Breast epithelium (tissue), 4 donors: ENCODE measurements at regions of chr12 and their contacts with region 1.

Region 1: GRCh38 chr12:7047306-7047705 is 13.2 kb upstream of the C1S start:
- DNase-seq: no peak
- H3K4me3 ChIP-seq: no peak overlapping the region
- H3K27ac ChIP-seq: no peak overlapping the region
- H3K4me1 ChIP-seq: no peaks in the 10 kb centered on the region
- H3K27me3 ChIP-seq: no peaks in the 10 kb centered on the region
- CTCF ChIP-seq: no peak
- POLR2A ChIP-seq: no peak

Region 2: GRCh38 chr12:5244513-5244972 is 1802.8 kb before region 1 on chr12:
- intact Hi-C with region 1: no loop called
- DNase-seq: no peak
- H3K4me3 ChIP-seq: no peak overlapping the region
- H3K27ac ChIP-seq: no peak overlapping the region
- H3K4me1 ChIP-seq: no peaks in the 10 kb centered on the region
- H3K27me3 ChIP-seq: no peaks in the 10 kb centered on the region
- CTCF ChIP-seq: no peak
- POLR2A ChIP-seq: no peak

Region 3: DNA sequence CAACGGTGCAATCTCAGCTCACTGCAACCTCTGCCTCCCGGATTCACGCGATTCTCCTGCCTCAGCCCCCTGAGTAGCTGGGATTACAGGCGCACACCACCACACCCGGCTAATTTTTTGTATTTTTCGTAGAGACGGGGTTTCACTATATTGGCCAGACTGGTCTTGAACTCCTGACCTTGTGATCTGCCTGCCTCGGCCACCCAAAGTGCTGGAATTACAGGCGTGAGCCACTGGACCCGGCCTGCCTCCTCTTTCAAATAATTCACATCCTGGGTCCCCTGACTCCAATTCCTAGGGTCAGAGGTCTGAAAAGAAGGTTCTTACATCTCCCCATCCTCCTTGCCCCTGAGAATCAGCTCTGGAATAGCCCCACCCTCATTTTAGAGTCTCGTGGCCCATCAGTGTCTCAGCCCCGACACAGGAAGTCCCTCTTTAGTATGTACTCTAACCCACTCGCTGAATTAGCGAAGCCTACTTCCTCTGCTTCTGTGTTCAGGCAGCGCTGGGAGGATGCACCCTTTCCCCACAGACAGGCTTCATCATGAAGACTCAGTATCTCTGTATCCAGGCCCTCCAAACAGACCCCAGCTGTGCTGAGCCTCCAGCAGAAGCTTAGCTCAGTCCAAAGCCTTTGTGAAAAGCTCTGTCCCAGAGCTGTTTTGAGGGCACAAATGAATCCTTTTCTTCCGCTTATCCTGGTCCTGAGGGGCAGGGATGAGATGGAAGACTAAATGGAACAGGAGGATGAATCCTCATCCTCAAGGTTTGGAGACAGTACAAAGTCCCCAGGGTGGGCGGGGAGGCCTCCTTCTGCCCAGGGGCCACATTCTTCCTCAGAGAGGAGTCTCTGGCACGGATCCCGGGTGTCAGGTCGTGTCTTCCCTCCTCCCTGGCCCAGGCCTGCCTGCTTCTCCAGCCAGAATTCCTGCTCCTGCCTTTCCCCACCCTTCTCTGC is 415.0 kb before region 1 on chr12:
- intact Hi-C with region 1: no loop called
- DNase-seq: no peak
- H3K4me3 ChIP-seq: no peak overlapping the region
- H3K27ac ChIP-seq: peak overlapping the region; percentile 58 to 76
- H3K4me1 ChIP-seq: peaks cover 0 to 6% of the 10 kb centered on the region in 2 donors
- H3K27me3 ChIP-seq: no peaks in the 10 kb centered on the region
- CTCF ChIP-seq: no peak
- POLR2A ChIP-seq: no peak

Region 4: GRCh38 chr12:7155481-7156034 is 108.3 kb after region 1 on chr12:
- intact Hi-C with region 1: no loop called
- DNase-seq: peak; percentile 64 to 69
- H3K4me3 ChIP-seq: peak overlapping the region in 2 of 3 donors; percentile 6 to 14
- H3K27ac ChIP-seq: peak overlapping the region; percentile 80 to 92
- H3K4me1 ChIP-seq: peaks cover 8 to 14% of the 10 kb centered on the region in 2 donors
- H3K27me3 ChIP-seq: no peaks in the 10 kb centered on the region
- CTCF ChIP-seq: no peak
- POLR2A ChIP-seq: no peak

Region 5: DNA sequence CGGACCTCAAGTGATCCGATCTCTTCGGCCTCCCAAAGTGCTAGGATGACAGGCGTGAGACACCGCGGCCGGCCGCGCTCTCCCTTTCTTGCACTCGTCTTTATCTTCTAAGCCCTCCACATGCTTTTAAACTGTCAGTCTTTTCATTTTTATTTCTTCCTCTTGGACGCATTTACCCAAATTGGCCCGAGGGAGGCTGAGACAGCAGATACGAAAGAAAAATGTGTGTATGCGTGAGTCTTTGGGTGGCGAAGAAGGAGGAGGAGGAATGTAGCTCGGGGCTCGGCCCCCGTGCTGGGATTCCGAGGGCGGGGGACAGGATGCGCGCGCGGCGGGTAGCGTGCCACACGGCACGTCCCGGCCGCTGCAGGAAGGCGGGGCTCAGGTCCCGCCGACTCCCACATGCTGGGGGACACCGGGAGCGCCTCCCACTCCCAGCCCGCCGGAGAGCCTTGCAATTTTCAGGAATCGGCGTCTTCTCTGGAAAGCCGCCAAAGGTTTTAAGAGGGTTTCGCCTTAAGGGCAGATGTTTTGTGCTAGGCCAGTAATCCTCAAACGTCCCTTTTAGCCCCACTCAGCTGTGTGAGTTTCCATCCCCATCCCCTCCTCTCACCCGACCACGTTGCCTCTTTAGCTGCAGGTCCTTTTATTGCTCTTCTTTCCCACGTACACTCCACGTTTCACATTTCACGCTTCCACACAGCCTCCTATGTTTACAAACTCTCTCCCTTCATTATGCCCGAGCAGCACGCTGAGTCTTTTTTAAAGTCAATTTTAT is 923.4 kb after region 1 on chr12:
- intact Hi-C with region 1: loop called (anchors 5 kb)
- DNase-seq: peak; percentile 65 to 73
- H3K4me3 ChIP-seq: peak overlapping the region; percentile 50 to 70 (median 59)
- H3K27ac ChIP-seq: peak overlapping the region; percentile 68 to 85
- H3K4me1 ChIP-seq: no peaks in the 10 kb centered on the region
- H3K27me3 ChIP-seq: no peaks in the 10 kb centered on the region
- CTCF ChIP-seq: peak; percentile 13 to 32 (median 18)
- POLR2A ChIP-seq: no peak